ENCODE measurements at regions of chr11 and their contacts with region 1.

Region 1: GRCh38 chr11:43944761-43945311 is 2.4 kb downstream of the C11orf96 start:
- DNase-seq: peak; percentile 78 to 91 (median 89)
- H3K4me3 ChIP-seq: peak overlapping the region; percentile 94
- H3K27ac ChIP-seq: peak overlapping the region; percentile 86 to 97
- H3K4me1 ChIP-seq: peaks cover 3% of the 10 kb centered on the region
- H3K27me3 ChIP-seq: no peaks in the 10 kb centered on the region
- CTCF ChIP-seq: peak; percentile 67 to 92 (median 92)
- EP300 ChIP-seq: no peak
- POLR2A ChIP-seq: no peak

Region 2: GRCh38 chr11:43895601-43896000 is 49.2 kb before region 1 on chr11:
- intact Hi-C with region 1: loop called in 2 of 4 experiments (anchors 5 to 10 kb)
- DNase-seq: no peak
- H3K4me3 ChIP-seq: no peak overlapping the region
- H3K27ac ChIP-seq: no peak overlapping the region
- H3K4me1 ChIP-seq: no peaks in the 10 kb centered on the region
- H3K27me3 ChIP-seq: no peaks in the 10 kb centered on the region
- CTCF ChIP-seq: no peak
- EP300 ChIP-seq: no peak
- POLR2A ChIP-seq: no peak

Region 3: GRCh38 chr11:43905813-43906241 is 39.0 kb before region 1 on chr11:
- intact Hi-C with region 1: loop called in 1 of 4 experiments (anchors 5 kb)
- DNase-seq: peak in 4 of 5 donors; percentile 54 to 86 (median 70)
- H3K4me3 ChIP-seq: no peak overlapping the region
- H3K27ac ChIP-seq: peak overlapping the region; percentile 53 to 79
- H3K4me1 ChIP-seq: peaks cover 5% of the 10 kb centered on the region
- H3K27me3 ChIP-seq: no peaks in the 10 kb centered on the region
- CTCF ChIP-seq: no peak
- EP300 ChIP-seq: no peak
- POLR2A ChIP-seq: no peak

Region 4: GRCh38 chr11:43987384-43988039 is 42.7 kb after region 1 on chr11:
- intact Hi-C with region 1: loop called in 2 of 4 experiments (anchors 2 to 5 kb)
- DNase-seq: peak; percentile 99 to 100 (median 99)
- H3K4me3 ChIP-seq: no peak overlapping the region
- H3K27ac ChIP-seq: peak overlapping the region; percentile 78 to 93
- H3K4me1 ChIP-seq: peaks cover 35% of the 10 kb centered on the region
- H3K27me3 ChIP-seq: no peaks in the 10 kb centered on the region
- CTCF ChIP-seq: peak in 1 of 3 donors; percentile 1
- EP300 ChIP-seq: peak; percentile 84
- POLR2A ChIP-seq: no peak

Region 5: DNA sequence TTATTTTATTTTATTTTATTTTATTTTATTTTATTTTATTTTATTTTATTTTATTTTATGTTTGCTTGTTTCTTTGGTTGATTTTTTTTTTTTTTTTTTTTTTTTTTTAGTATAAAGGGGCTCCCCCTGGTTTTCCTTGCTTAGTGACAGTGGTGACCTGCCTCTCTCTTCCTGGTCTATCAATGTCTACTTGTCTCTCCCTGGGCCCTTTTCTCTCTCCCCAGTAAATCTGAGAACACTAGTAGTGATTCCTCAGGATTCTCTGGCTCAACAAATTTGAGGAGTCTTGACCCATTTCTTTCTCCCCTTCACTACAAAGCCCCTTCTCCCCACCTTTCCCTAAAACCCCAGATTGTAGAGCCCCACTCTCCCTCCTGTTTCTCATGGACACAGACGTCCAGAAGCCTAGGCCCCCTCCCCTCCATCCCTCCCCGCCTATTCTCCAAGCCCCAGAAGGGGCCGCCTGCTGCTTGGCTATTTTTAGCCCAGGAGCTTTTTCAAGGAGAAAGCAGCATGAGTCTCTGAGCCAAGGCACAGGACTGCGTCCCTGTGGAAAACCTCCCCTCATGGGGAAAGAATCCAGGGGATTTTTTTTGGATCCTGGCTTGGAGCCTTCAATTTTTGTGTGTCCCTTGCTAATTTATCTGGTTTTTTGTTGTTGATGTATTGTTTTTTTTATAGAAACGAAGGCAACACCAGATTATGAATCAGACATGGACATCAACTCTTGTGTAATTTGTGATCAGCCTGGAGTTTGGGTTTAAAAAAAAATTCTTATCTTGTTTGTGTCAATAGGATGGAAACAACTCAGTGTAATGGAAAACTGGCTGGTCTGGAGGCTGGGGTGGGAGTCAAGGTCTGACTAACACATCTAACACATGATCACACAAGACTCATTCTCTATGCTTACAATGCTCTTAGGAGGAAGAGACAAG is 85.4 kb after region 1 on chr11:
- intact Hi-C with region 1: loop called (anchors 5 to 10 kb)
- DNase-seq: peak; percentile 76 to 89 (median 79)
- H3K4me3 ChIP-seq: no peak overlapping the region
- H3K27ac ChIP-seq: peak overlapping the region; percentile 70 to 97
- H3K4me1 ChIP-seq: peaks cover 19% of the 10 kb centered on the region
- H3K27me3 ChIP-seq: no peaks in the 10 kb centered on the region
- CTCF ChIP-seq: no peak
- EP300 ChIP-seq: peak; percentile 80
- POLR2A ChIP-seq: no peak

Region 6: DNA sequence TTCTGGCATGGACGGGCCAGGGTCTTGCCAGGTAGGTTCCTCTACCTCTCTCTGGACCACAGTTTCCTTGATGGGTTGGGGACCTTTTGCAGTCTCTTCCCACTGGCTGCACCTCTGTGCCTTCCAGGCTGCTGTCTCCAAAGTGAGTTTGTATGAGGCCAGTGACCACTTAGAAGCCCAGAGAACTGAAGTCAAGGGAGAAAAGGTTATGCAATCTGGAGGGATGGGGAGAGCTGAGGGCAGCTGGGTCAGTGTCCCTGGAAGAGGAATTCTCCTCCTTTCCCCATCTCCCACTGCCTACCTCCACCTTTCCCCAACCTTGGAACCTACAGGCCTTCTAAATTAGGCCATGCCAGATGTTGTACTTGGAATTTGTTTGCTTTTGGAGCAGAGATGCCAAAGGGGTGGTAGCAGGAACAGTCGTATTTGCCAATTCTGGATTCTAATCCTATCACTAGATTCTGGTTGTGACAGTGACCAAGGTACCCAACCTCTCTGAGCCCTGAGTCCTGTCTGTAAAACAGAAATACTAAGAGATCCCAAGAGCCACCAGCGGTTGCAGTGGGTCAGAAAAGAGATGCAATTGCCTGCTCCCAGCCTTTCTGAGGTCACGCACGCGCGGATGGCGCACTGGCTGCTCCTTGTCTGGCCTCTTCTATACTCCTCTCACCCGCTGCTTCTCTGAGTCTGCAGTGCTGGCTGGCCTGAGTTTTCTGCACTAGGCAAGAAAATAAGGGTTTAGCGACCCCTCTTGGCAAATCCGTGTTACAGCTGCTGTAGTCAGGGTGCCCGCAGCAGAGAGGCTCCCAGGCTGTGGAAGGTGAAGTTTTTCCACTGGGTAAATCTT is 92.2 kb after region 1 on chr11:
- intact Hi-C with region 1: loop called (anchors 5 to 10 kb)
- DNase-seq: peak; percentile 86 to 94 (median 89)
- H3K4me3 ChIP-seq: no peak overlapping the region
- H3K27ac ChIP-seq: peak overlapping the region; percentile 50 to 78
- H3K4me1 ChIP-seq: peaks cover 3% of the 10 kb centered on the region
- H3K27me3 ChIP-seq: no peaks in the 10 kb centered on the region
- CTCF ChIP-seq: peak; percentile 92 to 97 (median 93)
- EP300 ChIP-seq: no peak
- POLR2A ChIP-seq: peak; percentile 43

Measured in ovary (tissue), 10 donors.